GM12878 (cell line): ENCODE measurements at regions of chr5 and their contacts with region 1.

Region 1: GRCh38 chr5:150022163-150022540 is 21.6 kb downstream of the HMGXB3 start:
- DNase-seq: no peak
- ATAC-seq: no peak
- H3K4me3 ChIP-seq: no peak overlapping the region
- H3K27ac ChIP-seq: no peak overlapping the region
- H3K4me1 ChIP-seq: no peaks in the 10 kb centered on the region
- H3K27me3 ChIP-seq: no peaks in the 10 kb centered on the region
- CTCF ChIP-seq: no peak
- EP300 ChIP-seq: no peak
- POLR2A ChIP-seq: no peak
- RAD21 ChIP-seq: no peak

Region 2: GRCh38 chr5:150009671-150010387 is 12.3 kb before region 1 on chr5:
- CTCF ChIA-PET with region 1: interaction called, 4 read pairs
- POLR2A ChIA-PET with region 1: no interaction called
- RAD21 ChIA-PET with region 1: no interaction called
- SMC1A ChIA-PET with region 1: interaction called, 11 read pairs
- in situ Hi-C with region 1: no loop called
- intact Hi-C with region 1: no loop called
- DNase-seq: no peak
- ATAC-seq: no peak; the same call in 2 of the 3 replicates
- H3K4me3 ChIP-seq: no peak overlapping the region
- H3K27ac ChIP-seq: no peak overlapping the region
- H3K4me1 ChIP-seq: no peaks in the 10 kb centered on the region; the same call in 1 of the 2 replicates
- H3K27me3 ChIP-seq: no peaks in the 10 kb centered on the region
- CTCF ChIP-seq: no peak
- EP300 ChIP-seq: no peak
- POLR2A ChIP-seq: no peak
- RAD21 ChIP-seq: no peak

Region 3: GRCh38 chr5:151912360-151912759 is 1890.2 kb after region 1 on chr5:
- CTCF ChIA-PET with region 1: no interaction called
- POLR2A ChIA-PET with region 1: no interaction called
- RAD21 ChIA-PET with region 1: no interaction called
- SMC1A ChIA-PET with region 1: no interaction called
- in situ Hi-C with region 1: no loop called
- intact Hi-C with region 1: no loop called
- DNase-seq: no peak
- ATAC-seq: no peak
- H3K4me3 ChIP-seq: no peak overlapping the region
- H3K27ac ChIP-seq: no peak overlapping the region
- H3K4me1 ChIP-seq: no peaks in the 10 kb centered on the region
- H3K27me3 ChIP-seq: no peaks in the 10 kb centered on the region
- CTCF ChIP-seq: no peak
- EP300 ChIP-seq: no peak
- POLR2A ChIP-seq: no peak
- RAD21 ChIP-seq: no peak